Pancreas (tissue), 10 donors: ENCODE measurements at regions of chr21 and their contacts with region 1.

Region 1: GRCh38 chr21:41605178-41605933 is 97.4 kb upstream of the TMPRSS2 start:
- DNase-seq: peak in 2 of 6 donors; percentile 40 to 73
- ATAC-seq: peak in 3 of 4 donors; percentile 45 to 80 (median 48)
- H3K4me3 ChIP-seq: no peak overlapping the region
- H3K27ac ChIP-seq: no peak overlapping the region
- H3K4me1 ChIP-seq: peaks cover 0 to 11% (median 4%) of the 10 kb centered on the region in 3 donors
- H3K27me3 ChIP-seq: no peaks in the 10 kb centered on the region
- CTCF ChIP-seq: no peak

Region 2: GRCh38 chr21:41715649-41716281 is 110.4 kb after region 1 on chr21:
- intact Hi-C with region 1: no loop called
- DNase-seq: peak in 4 of 6 donors; percentile 35 to 64 (median 44)
- ATAC-seq: peak; percentile 63 to 76 (median 72)
- H3K4me3 ChIP-seq: no peak overlapping the region
- H3K27ac ChIP-seq: peak overlapping the region; percentile 13 to 77 (median 48)
- H3K4me1 ChIP-seq: peaks cover 0 to 17% (median 0%) of the 10 kb centered on the region in 3 donors
- H3K27me3 ChIP-seq: no peaks in the 10 kb centered on the region
- CTCF ChIP-seq: no peak

Region 3: GRCh38 chr21:41816220-41817165 is 211.1 kb after region 1 on chr21:
- intact Hi-C with region 1: loop called in 2 of 3 experiments (anchors 5 kb)
- DNase-seq: peak in 5 of 6 donors; percentile 57 to 82 (median 71)
- ATAC-seq: peak; percentile 87 to 97 (median 95)
- H3K4me3 ChIP-seq: no peak overlapping the region
- H3K27ac ChIP-seq: no peak overlapping the region
- H3K4me1 ChIP-seq: peaks cover 0 to 6% (median 0%) of the 10 kb centered on the region in 3 donors
- H3K27me3 ChIP-seq: no peaks in the 10 kb centered on the region
- CTCF ChIP-seq: peak; percentile 41 to 71 (median 61)